Activated CD4-positive, alpha-beta T cell treated with anti-CD3 and anti-CD28 coated beads for 36 hours (primary cell): ENCODE measurements at regions of chr4 and their contacts with region 1.

Region 1: GRCh38 chr4:6269616-6270511 is at the start of gene WFS1:
- DNase-seq: peak; percentile 98
- ATAC-seq: peak; percentile 100
- H3K4me3 Mint-ChIP-seq: peak within 1 kb of the TSS; percentile 71
- H3K27ac Mint-ChIP-seq: no peak within 1 kb of the TSS
- H3K4me1 Mint-ChIP-seq: peaks cover 16% of the 10 kb centered on the region
- H3K27me3 Mint-ChIP-seq: peaks cover 7% of the 10 kb centered on the region
- total RNA-seq, gene WFS1: 3.4 to 4.8 TPM

Region 2: GRCh38 chr4:6180841-6181631 is 88.8 kb before region 1 on chr4:
- CTCF ChIA-PET with region 1: no interaction called
- POLR2A ChIA-PET with region 1: no interaction called
- intact Hi-C with region 1: loop called in 1 of 2 experiments (anchors 5 kb)
- DNase-seq: peak; percentile 77
- ATAC-seq: peak; percentile 89
- H3K4me3 Mint-ChIP-seq: no peak overlapping the region
- H3K27ac Mint-ChIP-seq: peak overlapping the region; percentile 84
- H3K4me1 Mint-ChIP-seq: peaks cover 65% of the 10 kb centered on the region
- H3K27me3 Mint-ChIP-seq: peaks cover 10% of the 10 kb centered on the region

Region 3: DNA sequence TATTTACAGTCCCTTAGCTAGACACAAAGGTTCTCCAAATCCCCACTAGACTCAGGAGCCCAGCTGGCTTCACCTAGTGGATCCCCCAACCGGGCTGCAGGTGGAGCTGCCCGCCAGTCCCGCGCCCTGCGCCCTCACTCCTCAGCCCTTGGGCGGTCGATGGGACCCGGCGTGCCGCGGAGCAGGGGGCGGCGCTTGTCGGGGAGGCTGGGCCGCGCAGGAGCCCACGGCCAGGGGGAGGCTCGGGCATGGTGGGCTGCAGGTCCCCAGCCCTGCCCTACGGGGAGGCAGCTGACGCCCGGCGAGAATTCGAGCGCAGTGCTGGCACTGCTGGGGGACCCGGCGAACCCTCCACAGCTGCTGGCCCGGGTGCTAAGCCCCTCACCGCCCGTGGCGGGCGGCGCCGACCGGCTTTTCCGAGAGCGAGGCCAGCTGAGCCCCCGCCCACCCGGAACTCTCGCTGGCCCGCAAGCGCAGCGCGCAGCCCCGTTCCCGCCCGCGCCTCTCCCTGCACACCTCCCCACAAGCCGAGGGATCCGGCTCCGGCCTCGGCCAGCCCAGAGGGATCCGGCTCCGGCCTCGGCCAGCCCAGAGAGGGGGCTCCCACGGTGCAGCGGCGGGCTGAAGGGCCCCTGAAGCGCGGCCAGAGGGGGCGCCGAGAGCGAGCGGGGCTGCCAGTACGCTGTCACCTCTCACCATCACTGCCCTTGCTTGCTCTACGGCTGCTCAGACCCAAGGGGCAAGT is 39.2 kb after region 1 on chr4:
- CTCF ChIA-PET with region 1: no interaction called
- POLR2A ChIA-PET with region 1: no interaction called
- intact Hi-C with region 1: loop called in 1 of 2 experiments (anchors 2 kb)
- DNase-seq: peak; percentile 30
- ATAC-seq: peak; percentile 65
- H3K4me3 Mint-ChIP-seq: peak overlapping the region; percentile 23
- H3K27ac Mint-ChIP-seq: no peak overlapping the region
- H3K4me1 Mint-ChIP-seq: peaks cover 9% of the 10 kb centered on the region
- H3K27me3 Mint-ChIP-seq: peaks cover 35% of the 10 kb centered on the region

Region 4: GRCh38 chr4:6574747-6575502 is 305.1 kb after region 1 on chr4 and contains the start of gene MAN2B2:
- CTCF ChIA-PET with region 1: no interaction called
- POLR2A ChIA-PET with region 1: no interaction called
- intact Hi-C with region 1: loop called in 1 of 2 experiments (anchors 1 kb)
- DNase-seq: peak; percentile 89
- ATAC-seq: peak; percentile 96
- H3K4me3 Mint-ChIP-seq: peak within 1 kb of the TSS; percentile 78
- H3K27ac Mint-ChIP-seq: peak within 1 kb of the TSS; percentile 74
- H3K4me1 Mint-ChIP-seq: peaks cover 6% of the 10 kb centered on the region
- H3K27me3 Mint-ChIP-seq: no peaks in the 10 kb centered on the region
- total RNA-seq, gene MAN2B2: 13.0 to 14.6 TPM

Region 5: DNA sequence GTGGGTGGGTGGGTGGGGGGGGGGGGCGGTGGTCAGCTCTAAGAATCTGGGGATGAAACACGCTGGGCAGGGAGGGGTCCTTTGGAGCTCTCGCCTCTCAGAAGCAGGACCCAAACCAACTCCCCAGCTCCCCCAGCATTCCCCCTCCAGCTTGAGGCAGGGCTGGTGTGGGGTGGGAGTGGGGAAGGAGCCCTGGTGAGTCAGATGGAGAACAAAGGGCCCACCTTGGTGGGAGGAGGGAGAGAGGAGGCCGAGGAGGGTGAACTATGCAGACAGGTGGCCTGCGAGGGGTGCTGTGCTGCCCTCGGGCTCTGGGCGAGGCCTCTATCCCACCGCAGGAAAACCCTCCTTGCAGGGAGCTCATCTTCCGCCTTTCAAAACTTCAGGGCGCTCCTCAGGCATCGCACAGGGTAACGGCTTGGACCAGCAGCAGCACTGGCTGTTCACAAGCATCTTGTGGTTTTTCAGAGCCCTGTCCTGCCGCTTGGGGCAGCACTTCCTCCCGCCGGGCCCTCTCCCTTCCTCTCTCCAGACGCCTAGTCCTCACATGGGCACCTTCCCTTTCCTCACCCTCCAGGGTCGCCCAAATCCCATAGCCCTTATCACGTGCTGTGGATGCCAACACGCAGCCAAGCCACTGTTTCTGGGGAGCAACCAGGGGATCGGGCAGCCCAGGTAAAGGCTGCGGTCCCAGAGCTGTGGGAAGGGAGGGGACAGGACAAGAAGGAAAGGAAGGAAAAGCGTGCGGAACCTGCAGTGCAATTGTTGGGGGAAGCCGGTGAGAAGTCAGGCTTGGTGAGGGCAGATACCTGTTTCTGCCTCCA is 832.0 kb after region 1 on chr4:
- CTCF ChIA-PET with region 1: no interaction called
- POLR2A ChIA-PET with region 1: no interaction called
- intact Hi-C with region 1: loop called in 1 of 2 experiments (anchors 1 kb)
- DNase-seq: peak; percentile 78
- ATAC-seq: peak; percentile 74
- H3K4me3 Mint-ChIP-seq: peak overlapping the region; percentile 84
- H3K27ac Mint-ChIP-seq: no peak overlapping the region
- H3K4me1 Mint-ChIP-seq: peaks cover 8% of the 10 kb centered on the region
- H3K27me3 Mint-ChIP-seq: no peaks in the 10 kb centered on the region